ENCODE measurements at regions of chr13 and their contacts with region 1.

Region 1: GRCh38 chr13:56659041-56659471 is 481.7 kb upstream of the PRR20A start:
- DNase-seq: no peak
- H3K4me3 Mint-ChIP-seq: no peak overlapping the region
- H3K27ac Mint-ChIP-seq: no peak overlapping the region
- H3K4me1 Mint-ChIP-seq: no peaks in the 10 kb centered on the region
- H3K27me3 Mint-ChIP-seq: no peaks in the 10 kb centered on the region

Region 2: GRCh38 chr13:55199134-55199533 is 1459.9 kb before region 1 on chr13:
- intact Hi-C with region 1: no loop called
- DNase-seq: no peak
- H3K4me3 Mint-ChIP-seq: no peak overlapping the region
- H3K27ac Mint-ChIP-seq: no peak overlapping the region
- H3K4me1 Mint-ChIP-seq: no peaks in the 10 kb centered on the region
- H3K27me3 Mint-ChIP-seq: no peaks in the 10 kb centered on the region

Region 3: GRCh38 chr13:56681404-56681803 is 22.3 kb after region 1 on chr13:
- intact Hi-C with region 1: loop called (anchors 1 kb)
- DNase-seq: no peak
- H3K4me3 Mint-ChIP-seq: no peak overlapping the region
- H3K27ac Mint-ChIP-seq: no peak overlapping the region
- H3K4me1 Mint-ChIP-seq: no peaks in the 10 kb centered on the region
- H3K27me3 Mint-ChIP-seq: no peaks in the 10 kb centered on the region

Measured in activated T-helper 1 cell treated with anti-CD3 and anti-CD28 coated beads, Interleukin-12 subunit alpha, Interleukin-12 subunit beta, Interleukin-2, Interleukin-4 antibody, amounts not matched to agents 30 ng/mL and 10 ng/mL and 1 ng/mL, durations not matched to agents 14 hours and 24 hours and 36 hours (primary cell).